Naive thymus-derived CD4-positive, alpha-beta T cell (primary cell): ENCODE measurements at regions of chr2 and their contacts with region 1.

Region 1: GRCh38 chr2:231713730-231714430 is 5.6 kb downstream of the PTMA start:
- DNase-seq: peak; percentile 83 to 96 (median 90)
- ATAC-seq: peak; percentile 67
- H3K4me3 ChIP-seq: no peak overlapping the region
- H3K4me3 Mint-ChIP-seq: peak overlapping the region; percentile 37 to 72 (median 58)
- H3K27ac ChIP-seq: peak overlapping the region; percentile 59
- H3K27ac Mint-ChIP-seq: peak overlapping the region; percentile 79 to 97 (median 94)
- H3K4me1 ChIP-seq: peaks cover 28 to 34% of the 10 kb centered on the region in 2 donors
- H3K4me1 Mint-ChIP-seq: peaks cover 30 to 45% (median 35%) of the 10 kb centered on the region in 7 donors
- H3K27me3 ChIP-seq: no peaks in the 10 kb centered on the region
- H3K27me3 Mint-ChIP-seq: peaks cover 0 to 2% (median 0%) of the 10 kb centered on the region in 5 donors

Region 2: GRCh38 chr2:231612179-231613053 is 101.5 kb before region 1 on chr2:
- CTCF ChIA-PET with region 1: interaction called, 83 read pairs
- POLR2A ChIA-PET with region 1: interaction called, 52 read pairs
- intact Hi-C with region 1: loop called (anchors 1 kb)
- DNase-seq: peak; percentile 70 to 95 (median 84)
- ATAC-seq: peak; percentile 88
- H3K4me3 ChIP-seq: peak overlapping the region; percentile 63
- H3K4me3 Mint-ChIP-seq: peak overlapping the region; percentile 65 to 96 (median 86)
- H3K27ac ChIP-seq: no peak overlapping the region
- H3K27ac Mint-ChIP-seq: peak overlapping the region in 7 of 9 donors; percentile 38 to 99 (median 69)
- H3K4me1 ChIP-seq: peaks cover 13 to 19% of the 10 kb centered on the region in 2 donors
- H3K4me1 Mint-ChIP-seq: peaks cover 7 to 51% (median 31%) of the 10 kb centered on the region in 7 donors
- H3K27me3 ChIP-seq: no peaks in the 10 kb centered on the region
- H3K27me3 Mint-ChIP-seq: no peaks in the 10 kb centered on the region

Region 3: DNA sequence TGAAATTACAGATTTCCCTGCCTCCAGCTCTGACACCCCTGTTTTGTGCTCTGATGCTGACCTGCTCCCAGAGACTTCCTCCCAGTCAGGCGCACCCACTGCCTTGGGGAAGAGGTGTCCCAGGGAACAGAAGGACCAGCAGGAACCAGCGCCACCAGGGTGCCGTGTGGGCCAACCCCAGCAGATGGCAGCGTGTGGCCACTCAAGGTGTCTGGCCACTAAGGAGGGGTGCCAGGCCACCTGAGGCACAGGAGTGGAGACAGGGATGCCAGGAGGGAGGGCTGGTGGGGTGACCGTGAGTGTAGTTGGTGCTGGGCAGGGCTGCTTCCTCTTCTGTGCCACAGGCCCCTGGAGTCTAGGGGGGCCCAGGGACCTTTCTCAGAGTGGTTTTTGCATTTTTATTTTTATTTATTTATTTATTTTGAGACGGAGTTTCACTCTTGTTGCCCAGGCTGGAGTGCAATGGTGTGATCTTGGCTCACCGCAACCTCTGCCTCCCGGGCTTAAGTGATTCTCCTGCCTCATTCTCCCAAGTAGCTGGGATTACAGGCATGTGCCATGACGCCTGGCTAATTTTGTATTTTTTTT is 65.2 kb before region 1 on chr2:
- CTCF ChIA-PET with region 1: interaction called, 9 read pairs
- POLR2A ChIA-PET with region 1: no interaction called
- intact Hi-C with region 1: loop called (anchors 1 kb)
- DNase-seq: peak in 6 of 9 donors; percentile 21 to 73 (median 29)
- ATAC-seq: peak; percentile 87
- H3K4me3 ChIP-seq: no peak overlapping the region
- H3K4me3 Mint-ChIP-seq: no peak overlapping the region
- H3K27ac ChIP-seq: no peak overlapping the region
- H3K27ac Mint-ChIP-seq: peak overlapping the region in 1 of 9 donors; percentile 11
- H3K4me1 ChIP-seq: no peaks in the 10 kb centered on the region
- H3K4me1 Mint-ChIP-seq: peaks cover 0 to 20% (median 0%) of the 10 kb centered on the region in 7 donors
- H3K27me3 ChIP-seq: no peaks in the 10 kb centered on the region
- H3K27me3 Mint-ChIP-seq: no peaks in the 10 kb centered on the region

Region 4: DNA sequence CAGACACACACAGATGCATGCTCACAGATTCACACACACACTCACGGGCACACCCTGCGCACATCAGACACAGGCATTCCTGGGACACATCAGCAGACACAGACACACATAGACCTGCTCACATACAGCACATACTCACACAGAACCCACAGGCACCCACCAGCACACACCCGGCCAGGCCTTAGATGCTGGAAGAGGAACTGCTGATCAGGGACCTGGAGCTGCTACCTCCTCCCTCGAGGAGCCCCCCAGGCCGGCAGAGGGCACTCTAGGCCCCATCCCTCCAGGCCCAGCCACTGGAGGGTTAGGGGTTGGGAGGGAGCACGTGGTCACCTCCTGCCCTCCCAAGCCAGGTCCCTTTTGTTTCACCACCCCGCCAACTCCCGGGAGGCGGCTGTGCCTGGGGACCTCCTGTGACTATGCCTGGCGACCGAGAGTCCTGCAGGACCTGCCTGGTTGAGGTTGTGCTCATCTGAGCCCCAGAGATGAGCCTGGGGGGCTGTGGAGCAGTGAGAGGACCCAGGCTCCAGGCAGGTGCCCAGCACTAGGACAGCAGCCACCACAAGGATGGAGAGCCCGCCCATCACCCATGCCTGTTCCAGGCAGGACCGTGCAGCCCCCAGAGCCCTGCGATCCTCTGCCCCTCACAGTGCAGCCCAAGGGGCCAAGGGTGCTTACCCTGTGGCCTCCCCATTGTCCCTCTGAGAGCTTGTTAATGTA is 26.6 kb before region 1 on chr2:
- CTCF ChIA-PET with region 1: interaction called, 475 read pairs
- POLR2A ChIA-PET with region 1: interaction called, 80 read pairs
- intact Hi-C with region 1: loop called (anchors 1 to 2 kb)
- DNase-seq: peak; percentile 50 to 70 (median 64)
- ATAC-seq: peak; percentile 91
- H3K4me3 ChIP-seq: no peak overlapping the region
- H3K4me3 Mint-ChIP-seq: no peak overlapping the region
- H3K27ac ChIP-seq: no peak overlapping the region
- H3K27ac Mint-ChIP-seq: peak overlapping the region in 1 of 9 donors; percentile 8
- H3K4me1 ChIP-seq: no peaks in the 10 kb centered on the region
- H3K4me1 Mint-ChIP-seq: peaks cover 0 to 11% (median 8%) of the 10 kb centered on the region in 7 donors
- H3K27me3 ChIP-seq: no peaks in the 10 kb centered on the region
- H3K27me3 Mint-ChIP-seq: peaks cover 5 to 14% (median 8%) of the 10 kb centered on the region in 5 donors

Region 5: DNA sequence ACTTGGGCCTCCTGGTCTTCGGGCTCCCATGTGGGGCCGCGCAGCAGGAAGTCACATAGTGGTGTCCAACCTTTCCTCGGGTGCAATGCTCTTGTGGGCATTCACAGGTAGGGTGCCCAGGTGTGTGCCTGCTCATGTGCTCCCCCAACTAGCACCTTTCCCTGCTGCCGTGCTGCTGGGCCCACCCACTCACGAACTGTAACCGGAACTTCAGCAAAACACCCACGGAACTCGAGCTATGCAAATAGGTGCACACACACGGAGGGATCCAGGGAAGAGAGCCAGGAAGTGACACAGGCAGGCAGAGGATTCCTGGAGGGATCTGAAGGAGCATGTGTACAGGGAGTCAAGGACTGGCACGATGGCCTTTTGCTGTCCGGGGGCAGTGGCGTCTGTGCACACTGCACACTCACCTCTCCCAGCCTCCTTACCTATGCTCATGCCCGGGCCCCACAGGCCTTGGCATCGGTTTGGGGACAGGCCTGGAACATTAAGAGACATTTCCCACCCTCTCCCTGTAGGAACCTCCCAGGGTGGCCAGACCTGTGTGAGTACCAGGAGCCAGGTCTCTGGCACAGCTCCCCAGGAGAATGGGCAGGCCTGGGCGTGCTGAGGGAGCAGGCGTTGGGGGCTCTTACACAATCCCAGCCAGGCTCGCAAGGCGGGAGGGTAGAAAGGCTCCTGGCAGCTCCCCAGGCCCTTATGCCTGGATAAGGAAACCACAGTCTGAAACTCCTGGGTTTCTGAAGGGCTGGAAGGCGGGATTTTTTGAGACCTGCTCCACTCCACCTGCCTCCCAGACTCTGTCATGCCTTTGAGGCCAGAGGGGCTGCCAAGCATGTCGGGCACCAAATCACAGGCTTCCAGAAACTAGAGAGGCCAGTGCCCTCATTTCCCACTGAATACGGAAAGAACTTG is 12.2 kb before region 1 on chr2:
- CTCF ChIA-PET with region 1: interaction called, 27 read pairs
- POLR2A ChIA-PET with region 1: interaction called, 16 read pairs
- intact Hi-C with region 1: loop called in 1 of 2 experiments (anchors 1 kb)
- DNase-seq: no peak
- ATAC-seq: no peak
- H3K4me3 ChIP-seq: no peak overlapping the region
- H3K4me3 Mint-ChIP-seq: no peak overlapping the region
- H3K27ac ChIP-seq: no peak overlapping the region
- H3K27ac Mint-ChIP-seq: no peak overlapping the region
- H3K4me1 ChIP-seq: peaks cover 11 to 12% of the 10 kb centered on the region in 2 donors
- H3K4me1 Mint-ChIP-seq: peaks cover 0 to 21% (median 11%) of the 10 kb centered on the region in 7 donors
- H3K27me3 ChIP-seq: no peaks in the 10 kb centered on the region
- H3K27me3 Mint-ChIP-seq: no peaks in the 10 kb centered on the region

Region 6: GRCh38 chr2:231726228-231726627 is 12.3 kb after region 1 on chr2:
- CTCF ChIA-PET with region 1: interaction called, 11 read pairs
- POLR2A ChIA-PET with region 1: interaction called, 4 read pairs
- intact Hi-C with region 1: no loop called
- DNase-seq: no peak
- ATAC-seq: no peak
- H3K4me3 ChIP-seq: no peak overlapping the region
- H3K4me3 Mint-ChIP-seq: no peak overlapping the region
- H3K27ac ChIP-seq: no peak overlapping the region
- H3K27ac Mint-ChIP-seq: no peak overlapping the region
- H3K4me1 ChIP-seq: no peaks in the 10 kb centered on the region
- H3K4me1 Mint-ChIP-seq: no peaks in the 10 kb centered on the region
- H3K27me3 ChIP-seq: no peaks in the 10 kb centered on the region
- H3K27me3 Mint-ChIP-seq: no peaks in the 10 kb centered on the region

Region 7: GRCh38 chr2:231800493-231801091 is 86.7 kb after region 1 on chr2:
- CTCF ChIA-PET with region 1: no interaction called
- POLR2A ChIA-PET with region 1: no interaction called
- intact Hi-C with region 1: no loop called
- DNase-seq: peak in 3 of 9 donors; percentile 12 to 43 (median 18)
- ATAC-seq: peak; percentile 54
- H3K4me3 ChIP-seq: no peak overlapping the region
- H3K4me3 Mint-ChIP-seq: no peak overlapping the region
- H3K27ac ChIP-seq: no peak overlapping the region
- H3K27ac Mint-ChIP-seq: no peak overlapping the region
- H3K4me1 ChIP-seq: no peaks in the 10 kb centered on the region
- H3K4me1 Mint-ChIP-seq: peaks cover 0 to 21% (median 6%) of the 10 kb centered on the region in 7 donors
- H3K27me3 ChIP-seq: no peaks in the 10 kb centered on the region
- H3K27me3 Mint-ChIP-seq: no peaks in the 10 kb centered on the region

Region 8: DNA sequence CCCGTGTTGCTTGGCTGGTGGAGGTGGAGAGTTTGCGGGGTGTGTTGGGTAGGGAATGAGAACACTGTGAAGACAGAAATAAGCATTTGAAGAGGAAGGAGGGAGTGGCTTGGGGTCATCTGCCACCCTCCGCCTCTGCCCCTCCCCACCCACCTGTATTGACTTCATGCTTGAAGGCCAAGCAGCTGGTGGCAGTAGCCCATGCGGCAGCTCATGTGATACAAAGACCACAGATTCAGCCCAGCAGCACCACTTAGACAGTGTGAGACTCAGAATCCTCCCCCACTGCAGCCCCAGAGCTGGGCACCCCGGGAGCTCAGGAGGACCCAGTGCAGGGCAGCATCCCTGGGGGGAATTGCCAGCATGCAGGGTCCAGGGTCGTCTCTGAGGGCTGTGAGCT is 196.9 kb after region 1 on chr2:
- CTCF ChIA-PET with region 1: no interaction called
- POLR2A ChIA-PET with region 1: no interaction called
- intact Hi-C with region 1: no loop called
- DNase-seq: no peak
- ATAC-seq: peak; percentile 16
- H3K4me3 ChIP-seq: no peak overlapping the region
- H3K4me3 Mint-ChIP-seq: no peak overlapping the region
- H3K27ac ChIP-seq: no peak overlapping the region
- H3K27ac Mint-ChIP-seq: peak overlapping the region in 2 of 9 donors; percentile 8 to 32
- H3K4me1 ChIP-seq: peaks cover 0 to 10% of the 10 kb centered on the region in 2 donors
- H3K4me1 Mint-ChIP-seq: peaks cover 2 to 27% (median 14%) of the 10 kb centered on the region in 7 donors
- H3K27me3 ChIP-seq: no peaks in the 10 kb centered on the region
- H3K27me3 Mint-ChIP-seq: peaks cover 0 to 4% (median 0%) of the 10 kb centered on the region in 5 donors

Region 9: DNA sequence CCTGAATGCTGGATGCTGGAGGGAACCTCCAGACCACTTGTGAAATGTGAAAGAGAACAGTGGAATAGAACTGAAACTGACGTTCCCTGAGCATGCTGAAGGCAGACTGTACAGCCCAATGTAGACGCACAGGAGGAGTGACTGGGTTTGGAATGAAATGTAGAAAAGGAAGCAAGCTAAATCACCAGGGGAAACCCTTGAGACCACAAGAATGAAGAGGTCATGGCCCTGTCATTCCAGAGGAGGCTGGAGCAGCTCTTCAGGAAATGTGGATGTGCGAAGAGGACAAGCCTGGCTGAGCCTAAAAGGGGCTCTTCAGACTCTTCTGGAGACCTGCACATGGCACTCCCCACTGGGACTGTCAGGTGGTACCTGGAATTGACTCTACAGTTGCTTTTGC is 546.2 kb after region 1 on chr2:
- CTCF ChIA-PET with region 1: no interaction called
- POLR2A ChIA-PET with region 1: no interaction called
- intact Hi-C with region 1: no loop called
- DNase-seq: no peak
- ATAC-seq: no peak
- H3K4me3 ChIP-seq: no peak overlapping the region
- H3K4me3 Mint-ChIP-seq: no peak overlapping the region
- H3K27ac ChIP-seq: no peak overlapping the region
- H3K27ac Mint-ChIP-seq: no peak overlapping the region
- H3K4me1 ChIP-seq: no peaks in the 10 kb centered on the region
- H3K4me1 Mint-ChIP-seq: peaks cover 0 to 6% (median 0%) of the 10 kb centered on the region in 7 donors
- H3K27me3 ChIP-seq: no peaks in the 10 kb centered on the region
- H3K27me3 Mint-ChIP-seq: no peaks in the 10 kb centered on the region